ENCODE measurements at regions of chr3 and their contacts with region 1.

Region 1: DNA sequence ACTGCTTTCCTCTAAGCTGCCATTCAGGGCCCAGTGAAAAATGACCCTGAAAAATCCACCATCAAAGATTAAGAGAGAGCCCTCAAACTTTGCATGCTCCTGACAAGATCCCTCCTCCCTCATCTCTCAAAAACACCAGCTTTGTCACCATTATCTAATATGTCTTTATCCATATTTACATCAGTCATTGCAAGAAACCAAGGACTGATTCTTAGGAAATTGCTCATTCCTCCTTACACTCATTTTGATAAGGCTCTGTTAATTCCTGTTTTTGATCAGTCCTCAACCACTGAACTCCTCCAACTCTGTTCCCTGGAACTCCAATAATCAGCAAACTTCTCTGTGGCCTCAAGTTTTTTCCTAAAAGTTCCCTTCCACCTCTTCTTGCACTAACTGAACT is 51.8 kb downstream of the CD200 start:
- DNase-seq: no peak
- ATAC-seq: no peak
- H3K4me3 ChIP-seq: no peak overlapping the region
- H3K4me3 Mint-ChIP-seq: no peak overlapping the region
- H3K27ac ChIP-seq: no peak overlapping the region
- H3K27ac Mint-ChIP-seq: no peak overlapping the region
- H3K4me1 ChIP-seq: peaks cover 0 to 14% of the 10 kb centered on the region in 2 experiments
- H3K4me1 Mint-ChIP-seq: peaks cover 9 to 21% (median 10%) of the 10 kb centered on the region in 3 donors
- H3K27me3 ChIP-seq: no peaks in the 10 kb centered on the region
- H3K27me3 Mint-ChIP-seq: peaks cover 0 to 2% of the 10 kb centered on the region in 2 donors

Region 2: DNA sequence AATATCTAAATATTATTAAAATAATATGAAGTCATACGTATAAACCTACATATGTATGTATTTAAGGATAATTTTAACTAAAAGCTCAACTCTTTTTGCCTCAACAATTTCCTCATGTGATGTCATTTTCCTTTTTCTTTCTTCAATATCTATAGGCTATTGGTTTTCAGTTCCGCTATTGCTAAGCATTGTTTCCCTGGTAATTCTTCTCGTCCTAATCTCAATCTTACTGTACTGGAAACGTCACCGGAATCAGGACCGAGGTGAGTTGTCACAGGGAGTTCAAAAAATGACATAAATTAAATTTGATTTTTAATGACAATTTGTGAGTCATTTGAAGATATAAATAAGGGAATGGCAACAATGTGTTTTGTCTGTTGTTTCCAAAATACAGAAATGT is 35.2 kb before region 1 on chr3:
- CTCF ChIA-PET with region 1: no interaction called
- POLR2A ChIA-PET with region 1: interaction called in 1 of 2 experiments, 11 read pairs
- DNase-seq: no peak
- ATAC-seq: no peak
- H3K4me3 ChIP-seq: no peak overlapping the region
- H3K4me3 Mint-ChIP-seq: no peak overlapping the region
- H3K27ac ChIP-seq: no peak overlapping the region
- H3K27ac Mint-ChIP-seq: no peak overlapping the region
- H3K4me1 ChIP-seq: no peaks in the 10 kb centered on the region
- H3K4me1 Mint-ChIP-seq: peaks cover 5 to 8% (median 5%) of the 10 kb centered on the region in 3 donors
- H3K27me3 ChIP-seq: no peaks in the 10 kb centered on the region
- H3K27me3 Mint-ChIP-seq: no peaks in the 10 kb centered on the region

Region 3: GRCh38 chr3:112794622-112795172 is 409.9 kb after region 1 on chr3:
- CTCF ChIA-PET with region 1: no interaction called
- POLR2A ChIA-PET with region 1: no interaction called
- DNase-seq: peak in 3 of 35 experiments; percentile 6 to 17 (median 9)
- ATAC-seq: peak; percentile 47 to 70 (median 56)
- H3K4me3 ChIP-seq: no peak overlapping the region
- H3K4me3 Mint-ChIP-seq: peak overlapping the region in 1 of 3 donors; percentile 49
- H3K27ac ChIP-seq: peak overlapping the region; percentile 32
- H3K27ac Mint-ChIP-seq: peak overlapping the region; percentile 19 to 82
- H3K4me1 ChIP-seq: peaks cover 15 to 27% of the 10 kb centered on the region in 2 experiments
- H3K4me1 Mint-ChIP-seq: peaks cover 30 to 36% (median 35%) of the 10 kb centered on the region in 3 donors
- H3K27me3 ChIP-seq: no peaks in the 10 kb centered on the region
- H3K27me3 Mint-ChIP-seq: no peaks in the 10 kb centered on the region

Measured in T-cell (primary cell).